Activated T-helper 1 cell treated with anti-CD3 and anti-CD28 coated beads, Interleukin-12 subunit alpha, Interleukin-12 subunit beta, Interleukin-2, Interleukin-4 antibody, amounts not matched to agents 30 ng/mL and 10 ng/mL and 1 ng/mL, durations not matched to agents 14 hours and 24 hours and 36 hours (primary cell): ENCODE measurements at regions of chr10 and their contacts with region 1.

Region 1: GRCh38 chr10:77111611-77112550 is 525.7 kb downstream of the KCNMA1 start:
- DNase-seq: no peak
- H3K4me3 Mint-ChIP-seq: no peak overlapping the region
- H3K27ac Mint-ChIP-seq: peak overlapping the region; percentile 9
- H3K4me1 Mint-ChIP-seq: no peaks in the 10 kb centered on the region
- H3K27me3 Mint-ChIP-seq: no peaks in the 10 kb centered on the region

Region 2: GRCh38 chr10:76984559-76985443 is 127.1 kb before region 1 on chr10:
- intact Hi-C with region 1: no loop called
- DNase-seq: peak; percentile 20
- H3K4me3 Mint-ChIP-seq: no peak overlapping the region
- H3K27ac Mint-ChIP-seq: no peak overlapping the region
- H3K4me1 Mint-ChIP-seq: no peaks in the 10 kb centered on the region
- H3K27me3 Mint-ChIP-seq: peaks cover 2% of the 10 kb centered on the region

Region 3: GRCh38 chr10:77036993-77037734 is 74.7 kb before region 1 on chr10:
- intact Hi-C with region 1: loop called (anchors 5 kb)
- DNase-seq: no peak
- H3K4me3 Mint-ChIP-seq: no peak overlapping the region
- H3K27ac Mint-ChIP-seq: no peak overlapping the region
- H3K4me1 Mint-ChIP-seq: peaks cover 7% of the 10 kb centered on the region
- H3K27me3 Mint-ChIP-seq: peaks cover 3% of the 10 kb centered on the region